ENCODE measurements at regions of chr6 and their contacts with region 1.

Region 1: GRCh38 chr6:108294727-108295625 is at the start of gene AFG1L:
- DNase-seq: peak; percentile 82
- H3K4me3 Mint-ChIP-seq: peak within 1 kb of the TSS; percentile 100
- H3K27ac Mint-ChIP-seq: peak within 1 kb of the TSS; percentile 100
- H3K4me1 Mint-ChIP-seq: peaks cover 26% of the 10 kb centered on the region
- H3K27me3 Mint-ChIP-seq: peaks cover 2% of the 10 kb centered on the region
- total RNA-seq, gene AFG1L: 4.3 and 6.0 TPM in 2 replicates

Region 2: DNA sequence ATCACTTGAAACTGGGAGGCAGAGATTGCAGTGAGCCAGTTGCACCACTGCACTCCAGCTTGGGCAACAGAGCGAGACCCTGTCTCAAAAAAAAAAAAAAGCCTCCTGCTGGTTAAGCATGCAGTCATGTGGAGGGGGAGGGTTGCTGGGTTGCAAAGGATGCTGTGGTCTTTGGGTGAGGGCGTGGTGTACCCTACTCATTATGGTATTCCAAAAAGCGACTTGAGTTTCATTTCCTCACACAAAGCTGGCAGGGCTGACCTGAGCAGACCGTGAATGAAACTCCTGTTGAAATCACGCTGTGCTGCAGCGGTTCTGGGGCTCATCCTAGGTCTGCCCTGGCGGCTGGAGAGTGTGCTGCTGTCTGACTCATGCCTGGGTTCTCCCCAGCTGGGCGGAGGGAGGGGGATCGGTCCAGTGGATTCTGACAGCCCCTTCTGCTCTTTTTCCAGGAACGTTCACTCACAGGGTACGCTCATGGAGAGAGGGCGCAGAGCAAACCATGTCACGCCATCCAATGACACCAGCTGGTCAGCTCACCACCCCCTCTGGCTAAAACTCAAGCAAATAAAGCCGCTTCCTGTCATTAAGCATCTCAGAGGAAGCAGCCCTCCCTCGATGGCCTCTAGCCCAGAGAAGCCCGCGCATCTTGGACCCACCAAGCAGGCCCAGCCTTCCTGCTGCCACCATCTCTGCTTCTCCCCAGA is 637.1 kb before region 1 on chr6:
- intact Hi-C with region 1: loop called (anchors 5 kb)
- DNase-seq: peak; percentile 54
- H3K4me3 Mint-ChIP-seq: peak overlapping the region; percentile 48
- H3K27ac Mint-ChIP-seq: no peak overlapping the region
- H3K4me1 Mint-ChIP-seq: peaks cover 35% of the 10 kb centered on the region
- H3K27me3 Mint-ChIP-seq: peaks cover 14% of the 10 kb centered on the region

Region 3: GRCh38 chr6:108074359-108075144 is 220.4 kb before region 1 on chr6 and contains the start of gene OSTM1:
- intact Hi-C with region 1: loop called (anchors 10 kb)
- DNase-seq: peak; percentile 92
- H3K4me3 Mint-ChIP-seq: peak within 1 kb of the TSS; percentile 85
- H3K27ac Mint-ChIP-seq: peak within 1 kb of the TSS; percentile 80
- H3K4me1 Mint-ChIP-seq: peaks cover 12% of the 10 kb centered on the region
- H3K27me3 Mint-ChIP-seq: peaks cover 25% of the 10 kb centered on the region
- total RNA-seq, gene OSTM1: 19.9 and 22.5 TPM in 2 replicates

Region 4: GRCh38 chr6:108348655-108349349 is 53.8 kb after region 1 on chr6:
- intact Hi-C with region 1: loop called (anchors 2 kb)
- DNase-seq: no peak
- H3K4me3 Mint-ChIP-seq: no peak overlapping the region
- H3K27ac Mint-ChIP-seq: peak overlapping the region; percentile 64
- H3K4me1 Mint-ChIP-seq: peaks cover 27% of the 10 kb centered on the region
- H3K27me3 Mint-ChIP-seq: no peaks in the 10 kb centered on the region